Sciatic nerve (tissue), 2 donors: ENCODE measurements at regions of chr7 and their contacts with region 1.

Region 1: GRCh38 chr7:115844857-115845256 is 185.7 kb downstream of the TFEC start:
- DNase-seq: no peak
- ATAC-seq: no peak

Region 2: GRCh38 chr7:114081606-114082425 is 1763.0 kb before region 1 on chr7:
- intact Hi-C with region 1: loop called (anchors 5 kb)
- DNase-seq: no peak
- ATAC-seq: peak; percentile 16